Gastrocnemius medialis (tissue), 4 donors: ENCODE measurements at regions of chr11 and their contacts with region 1.

Region 1: DNA sequence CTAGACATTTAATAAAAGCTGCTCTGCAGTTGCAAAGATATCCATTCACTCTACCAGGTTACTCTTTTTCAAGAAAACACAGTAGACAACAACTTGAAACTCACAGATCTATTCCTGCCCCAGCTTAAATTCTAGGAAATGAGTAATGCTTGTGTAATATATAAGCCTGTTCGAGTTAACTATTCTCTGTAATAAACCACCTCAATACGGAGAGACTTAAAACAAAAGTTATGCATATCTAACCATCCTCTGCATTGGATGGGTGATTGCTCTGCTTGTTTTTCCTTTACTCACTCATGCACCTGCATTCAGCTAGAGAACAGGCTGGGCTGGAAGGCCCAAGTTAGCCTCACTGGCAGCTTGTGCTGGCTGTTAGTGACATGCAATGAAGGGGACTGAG is 13.3 kb downstream of the LRRC4C start:
- DNase-seq: no peak
- ATAC-seq: no peak
- H3K4me3 ChIP-seq: no peak overlapping the region
- H3K27ac ChIP-seq: no peak overlapping the region
- H3K4me1 ChIP-seq: no peaks in the 10 kb centered on the region
- H3K27me3 ChIP-seq: no peaks in the 10 kb centered on the region
- CTCF ChIP-seq: no peak
- POLR2A ChIP-seq: no peak

Region 2: GRCh38 chr11:41508121-41508520 is 62.0 kb after region 1 on chr11:
- in situ Hi-C with region 1: loop called in 1 of 4 experiments (anchors 10 kb)
- intact Hi-C with region 1: no loop called
- DNase-seq: no peak
- ATAC-seq: no peak
- H3K4me3 ChIP-seq: no peak overlapping the region
- H3K27ac ChIP-seq: no peak overlapping the region
- H3K4me1 ChIP-seq: no peaks in the 10 kb centered on the region
- H3K27me3 ChIP-seq: no peaks in the 10 kb centered on the region
- CTCF ChIP-seq: no peak
- POLR2A ChIP-seq: no peak